Naive thymus-derived CD4-positive, alpha-beta T cell (primary cell): ENCODE measurements at regions of chr11 and their contacts with region 1.

Region 1: GRCh38 chr11:128482512-128483191 is 104.7 kb downstream of the ETS1 start:
- DNase-seq: peak in 6 of 9 donors; percentile 62 to 86 (median 68)
- ATAC-seq: peak; percentile 74
- H3K4me3 ChIP-seq: peak overlapping the region; percentile 47
- H3K4me3 Mint-ChIP-seq: peak overlapping the region; percentile 73 to 99 (median 82)
- H3K27ac ChIP-seq: peak overlapping the region; percentile 97
- H3K27ac Mint-ChIP-seq: peak overlapping the region; percentile 92 to 99 (median 98)
- H3K4me1 ChIP-seq: peaks cover 89 to 95% of the 10 kb centered on the region in 2 donors
- H3K4me1 Mint-ChIP-seq: peaks cover 82 to 100% (median 99%) of the 10 kb centered on the region in 7 donors
- H3K27me3 ChIP-seq: no peaks in the 10 kb centered on the region
- H3K27me3 Mint-ChIP-seq: no peaks in the 10 kb centered on the region

Region 2: GRCh38 chr11:128302425-128303186 is 180.0 kb before region 1 on chr11:
- CTCF ChIA-PET with region 1: interaction called, 3 read pairs
- POLR2A ChIA-PET with region 1: interaction called, 355 read pairs
- intact Hi-C with region 1: no loop called
- DNase-seq: peak; percentile 39 to 97 (median 92)
- ATAC-seq: peak; percentile 92
- H3K4me3 ChIP-seq: peak overlapping the region; percentile 52
- H3K4me3 Mint-ChIP-seq: peak overlapping the region; percentile 81 to 98 (median 93)
- H3K27ac ChIP-seq: peak overlapping the region; percentile 98
- H3K27ac Mint-ChIP-seq: peak overlapping the region; percentile 93 to 100 (median 98)
- H3K4me1 ChIP-seq: peaks cover 83 to 95% of the 10 kb centered on the region in 2 donors
- H3K4me1 Mint-ChIP-seq: peaks cover 52 to 92% (median 88%) of the 10 kb centered on the region in 7 donors
- H3K27me3 ChIP-seq: no peaks in the 10 kb centered on the region
- H3K27me3 Mint-ChIP-seq: no peaks in the 10 kb centered on the region

Region 3: GRCh38 chr11:128463371-128463829 is 19.3 kb before region 1 on chr11:
- CTCF ChIA-PET with region 1: interaction called, 6 read pairs
- POLR2A ChIA-PET with region 1: interaction called, 278 read pairs
- intact Hi-C with region 1: loop called in 1 of 2 experiments (anchors 2 kb)
- DNase-seq: no peak
- ATAC-seq: no peak
- H3K4me3 ChIP-seq: peak overlapping the region; percentile 37
- H3K4me3 Mint-ChIP-seq: peak overlapping the region; percentile 73 to 99 (median 80)
- H3K27ac ChIP-seq: peak overlapping the region; percentile 97
- H3K27ac Mint-ChIP-seq: peak overlapping the region; percentile 88 to 100 (median 98)
- H3K4me1 ChIP-seq: peaks cover 74 to 86% of the 10 kb centered on the region in 2 donors
- H3K4me1 Mint-ChIP-seq: peaks cover 64 to 100% (median 93%) of the 10 kb centered on the region in 7 donors
- H3K27me3 ChIP-seq: no peaks in the 10 kb centered on the region
- H3K27me3 Mint-ChIP-seq: no peaks in the 10 kb centered on the region

Region 4: GRCh38 chr11:128497061-128497775 is 14.6 kb after region 1 on chr11:
- CTCF ChIA-PET with region 1: interaction called, 15 read pairs
- POLR2A ChIA-PET with region 1: interaction called, 560 read pairs
- intact Hi-C with region 1: loop called (anchors 1 kb)
- DNase-seq: no peak
- ATAC-seq: peak; percentile 32
- H3K4me3 ChIP-seq: peak overlapping the region; percentile 36
- H3K4me3 Mint-ChIP-seq: peak overlapping the region; percentile 81 to 100 (median 94)
- H3K27ac ChIP-seq: peak overlapping the region; percentile 97
- H3K27ac Mint-ChIP-seq: peak overlapping the region; percentile 89 to 99 (median 95)
- H3K4me1 ChIP-seq: peaks cover 90 to 95% of the 10 kb centered on the region in 2 donors
- H3K4me1 Mint-ChIP-seq: peaks cover 83 to 100% (median 97%) of the 10 kb centered on the region in 7 donors
- H3K27me3 ChIP-seq: no peaks in the 10 kb centered on the region
- H3K27me3 Mint-ChIP-seq: no peaks in the 10 kb centered on the region

Region 5: GRCh38 chr11:128506999-128507611 is 24.5 kb after region 1 on chr11:
- CTCF ChIA-PET with region 1: interaction called, 12 read pairs
- POLR2A ChIA-PET with region 1: interaction called, 560 read pairs
- intact Hi-C with region 1: no loop called
- DNase-seq: peak in 1 of 9 donors; percentile 60
- ATAC-seq: no peak
- H3K4me3 ChIP-seq: peak overlapping the region; percentile 96
- H3K4me3 Mint-ChIP-seq: peak overlapping the region; percentile 85 to 100 (median 98)
- H3K27ac ChIP-seq: peak overlapping the region; percentile 97
- H3K27ac Mint-ChIP-seq: peak overlapping the region; percentile 87 to 99 (median 97)
- H3K4me1 ChIP-seq: peaks cover 89 to 91% of the 10 kb centered on the region in 2 donors
- H3K4me1 Mint-ChIP-seq: peaks cover 70 to 98% (median 92%) of the 10 kb centered on the region in 7 donors
- H3K27me3 ChIP-seq: no peaks in the 10 kb centered on the region
- H3K27me3 Mint-ChIP-seq: no peaks in the 10 kb centered on the region

Region 6: DNA sequence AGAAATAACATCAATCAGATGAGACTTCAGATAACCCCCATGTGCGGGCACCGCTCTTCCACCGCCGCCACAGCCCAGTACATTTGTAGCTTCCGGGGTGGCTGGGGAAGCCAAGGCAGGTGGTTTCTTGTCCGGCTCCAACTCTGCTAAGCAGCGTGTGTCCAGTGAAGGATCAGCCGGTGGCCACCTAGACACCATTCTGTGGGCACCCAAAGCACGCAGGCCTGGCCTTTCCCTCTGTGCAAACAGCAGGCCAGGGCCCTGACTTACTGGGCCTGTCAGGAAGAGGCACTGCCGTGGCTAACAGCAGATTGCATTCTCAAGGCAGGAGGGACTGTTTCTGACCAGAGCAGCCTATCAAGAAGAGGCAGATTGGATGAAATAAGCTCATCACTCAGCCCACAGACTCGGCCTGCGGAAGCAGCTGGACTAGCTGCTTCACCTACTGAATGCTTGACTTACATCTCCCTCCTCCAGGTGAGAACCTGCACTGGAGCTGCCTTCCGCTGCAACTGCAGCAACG is 29.9 kb after region 1 on chr11:
- CTCF ChIA-PET with region 1: interaction called, 10 read pairs
- POLR2A ChIA-PET with region 1: interaction called, 560 read pairs
- intact Hi-C with region 1: loop called in 1 of 2 experiments (anchors 2 kb)
- DNase-seq: peak in 5 of 9 donors; percentile 26 to 56 (median 47)
- ATAC-seq: peak; percentile 40
- H3K4me3 ChIP-seq: peak overlapping the region; percentile 96
- H3K4me3 Mint-ChIP-seq: peak overlapping the region; percentile 94 to 100 (median 98)
- H3K27ac ChIP-seq: peak overlapping the region; percentile 97
- H3K27ac Mint-ChIP-seq: peak overlapping the region; percentile 92 to 99 (median 97)
- H3K4me1 ChIP-seq: peaks cover 54 to 59% of the 10 kb centered on the region in 2 donors
- H3K4me1 Mint-ChIP-seq: peaks cover 50 to 94% (median 77%) of the 10 kb centered on the region in 7 donors
- H3K27me3 ChIP-seq: no peaks in the 10 kb centered on the region
- H3K27me3 Mint-ChIP-seq: no peaks in the 10 kb centered on the region